PC-9 (cell line): ENCODE measurements at regions of chr2 and their contacts with region 1.

Region 1: GRCh38 chr2:238380391-238381184 is 46.1 kb upstream of the ASB1 start:
- DNase-seq: peak in 1 of 2 experiments; percentile 98
- H3K4me3 ChIP-seq: no peak overlapping the region
- H3K27ac ChIP-seq: peak overlapping the region; percentile 58
- H3K4me1 ChIP-seq: peaks cover 26% of the 10 kb centered on the region
- H3K27me3 ChIP-seq: no peaks in the 10 kb centered on the region
- CTCF ChIP-seq: no peak

Region 2: DNA sequence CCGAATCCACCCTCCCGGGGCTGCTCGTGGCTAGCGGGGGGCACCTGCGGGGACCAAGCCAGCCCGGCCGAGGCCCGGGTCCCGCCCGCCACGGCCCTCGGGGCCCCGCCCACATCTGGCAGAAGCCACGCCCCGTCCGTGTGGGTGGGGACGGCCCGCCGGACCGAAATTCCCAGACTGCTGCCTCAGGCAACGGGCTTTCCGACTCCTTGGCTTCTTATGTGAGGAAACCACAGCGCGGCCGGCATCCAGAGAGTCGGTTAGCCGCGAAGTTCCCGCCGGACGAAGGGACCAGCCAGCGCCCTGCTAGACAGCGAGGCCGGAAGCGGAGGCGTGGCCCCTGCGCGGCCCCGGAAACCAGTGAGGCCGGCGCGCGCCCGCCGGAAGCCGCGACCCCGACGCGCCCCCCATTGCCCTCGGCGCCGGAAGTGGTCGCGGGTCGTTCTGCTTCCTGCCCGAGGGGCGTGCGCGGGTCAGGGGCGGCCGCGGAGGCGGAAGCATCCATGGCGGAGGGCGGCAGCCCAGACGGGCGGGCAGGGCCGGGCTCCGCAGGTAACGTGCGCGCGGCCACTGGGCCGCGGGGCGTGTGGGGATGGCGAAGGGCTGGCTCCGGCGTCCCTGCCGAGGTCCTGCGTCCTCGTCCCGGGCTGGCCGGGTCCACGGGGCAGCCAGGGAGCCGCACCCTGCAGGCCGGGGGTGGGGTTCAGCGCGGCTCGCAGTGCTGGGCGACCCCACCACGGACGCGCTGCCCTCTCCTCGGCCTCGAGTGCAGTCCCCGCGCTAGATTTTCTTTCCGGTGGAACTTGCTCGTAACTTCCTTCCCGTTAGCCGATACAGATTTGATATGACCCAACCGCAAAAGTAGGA is 46.2 kb after region 1 on chr2 and contains the start of gene ASB1:
- CTCF ChIA-PET with region 1: no interaction called
- POLR2A ChIA-PET with region 1: no interaction called
- intact Hi-C with region 1: loop called (anchors 5 kb)
- DNase-seq: peak; percentile 78 to 89
- H3K4me3 ChIP-seq: peak within 1 kb of the TSS; percentile 92
- H3K27ac ChIP-seq: peak within 1 kb of the TSS; percentile 75
- H3K4me1 ChIP-seq: peaks cover 17% of the 10 kb centered on the region
- H3K27me3 ChIP-seq: no peaks in the 10 kb centered on the region
- CTCF ChIP-seq: no peak
- total RNA-seq, gene ASB1: 56.7 and 64.6 TPM in 2 replicates

Region 3: DNA sequence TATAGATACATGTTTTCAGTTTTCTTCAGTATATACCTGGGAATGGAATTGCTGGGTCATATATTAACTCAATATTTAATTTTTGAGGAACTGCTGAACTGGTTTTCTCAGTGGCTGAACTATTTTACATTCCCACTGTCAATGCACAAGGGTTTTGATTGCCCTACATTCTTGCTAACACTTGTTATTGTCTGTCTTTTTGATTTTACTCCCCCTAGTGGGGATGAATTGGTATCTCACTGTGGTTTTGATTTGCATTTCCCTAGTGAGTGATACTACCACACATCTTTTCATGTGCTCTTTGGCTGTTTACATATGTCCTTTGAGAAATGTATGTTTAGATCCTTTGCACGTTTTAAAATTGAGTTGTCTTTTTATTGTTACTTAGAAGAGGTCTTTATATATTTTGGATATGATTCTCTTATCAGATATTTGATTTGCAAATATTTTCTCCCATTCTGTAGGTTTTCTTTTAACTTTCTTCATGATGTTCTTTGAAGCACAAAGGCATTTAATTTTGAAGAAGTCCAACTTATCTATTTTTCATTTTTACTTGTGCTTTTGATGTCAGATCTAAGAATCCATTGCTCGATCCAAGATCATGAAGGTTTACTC is 82.3 kb after region 1 on chr2:
- CTCF ChIA-PET with region 1: no interaction called
- POLR2A ChIA-PET with region 1: no interaction called
- intact Hi-C with region 1: no loop called
- DNase-seq: peak in 1 of 2 experiments; percentile 52
- H3K4me3 ChIP-seq: no peak overlapping the region
- H3K27ac ChIP-seq: no peak overlapping the region
- H3K4me1 ChIP-seq: no peaks in the 10 kb centered on the region
- H3K27me3 ChIP-seq: peaks cover 30% of the 10 kb centered on the region
- CTCF ChIP-seq: peak; percentile 93

Region 4: GRCh38 chr2:238644095-238645081 is 263.8 kb after region 1 on chr2:
- CTCF ChIA-PET with region 1: no interaction called
- POLR2A ChIA-PET with region 1: interaction called, 16 read pairs
- intact Hi-C with region 1: no loop called
- DNase-seq: peak; percentile 69 to 92
- H3K4me3 ChIP-seq: no peak overlapping the region
- H3K27ac ChIP-seq: peak overlapping the region; percentile 46
- H3K4me1 ChIP-seq: peaks cover 30% of the 10 kb centered on the region
- H3K27me3 ChIP-seq: peaks cover 15% of the 10 kb centered on the region
- CTCF ChIP-seq: no peak

Region 5: DNA sequence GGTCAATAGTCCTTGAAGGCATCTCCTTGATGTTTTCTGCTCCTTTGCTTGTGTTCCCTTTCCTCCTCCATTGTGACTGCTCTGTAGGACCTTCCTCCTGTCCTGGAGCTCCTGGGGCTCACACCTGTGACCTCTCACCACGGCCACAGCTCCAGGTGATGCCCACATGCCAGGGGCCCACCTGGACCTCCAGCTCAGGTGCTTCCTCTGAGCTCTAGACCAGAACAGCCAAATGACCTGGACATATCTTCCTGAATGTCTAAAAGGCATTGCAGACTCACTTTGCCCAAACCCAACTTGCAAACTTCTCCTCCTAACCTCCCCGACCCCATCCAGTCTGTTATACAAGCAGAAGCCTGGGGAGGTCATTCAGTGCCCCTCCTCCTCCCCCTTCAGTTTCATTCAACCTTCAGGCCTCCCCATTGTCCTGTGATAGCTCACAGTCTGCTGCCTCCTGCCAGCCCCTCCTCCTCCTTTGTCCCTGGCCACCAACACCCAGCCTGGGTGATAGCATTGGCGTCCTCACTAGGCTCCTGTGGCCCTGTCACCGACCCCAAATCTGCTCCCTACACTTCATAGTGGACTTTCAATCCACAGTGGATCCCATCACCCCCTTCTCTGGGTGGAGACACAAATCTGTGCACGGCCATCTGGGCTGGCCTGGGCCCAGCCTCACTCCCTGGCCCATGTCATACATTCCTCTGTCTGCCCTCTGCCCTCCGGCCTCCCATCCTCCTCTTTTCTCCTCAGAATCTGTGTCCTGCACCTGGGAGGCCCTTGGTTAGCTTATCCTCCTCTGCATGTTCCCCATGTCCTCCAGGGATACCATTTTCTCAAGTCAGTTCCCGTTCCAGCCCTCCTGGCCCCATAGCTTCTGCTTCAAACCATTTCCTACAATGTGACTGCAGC is 1330.6 kb after region 1 on chr2:
- CTCF ChIA-PET with region 1: no interaction called
- POLR2A ChIA-PET with region 1: interaction called, 28 read pairs
- intact Hi-C with region 1: no loop called
- DNase-seq: no peak
- H3K4me3 ChIP-seq: no peak overlapping the region
- H3K27ac ChIP-seq: no peak overlapping the region
- H3K4me1 ChIP-seq: no peaks in the 10 kb centered on the region
- H3K27me3 ChIP-seq: peaks cover 57% of the 10 kb centered on the region
- CTCF ChIP-seq: no peak